Right lobe of liver (tissue), 6 donors: ENCODE measurements at regions of chr6 and their contacts with region 1.

Region 1: DNA sequence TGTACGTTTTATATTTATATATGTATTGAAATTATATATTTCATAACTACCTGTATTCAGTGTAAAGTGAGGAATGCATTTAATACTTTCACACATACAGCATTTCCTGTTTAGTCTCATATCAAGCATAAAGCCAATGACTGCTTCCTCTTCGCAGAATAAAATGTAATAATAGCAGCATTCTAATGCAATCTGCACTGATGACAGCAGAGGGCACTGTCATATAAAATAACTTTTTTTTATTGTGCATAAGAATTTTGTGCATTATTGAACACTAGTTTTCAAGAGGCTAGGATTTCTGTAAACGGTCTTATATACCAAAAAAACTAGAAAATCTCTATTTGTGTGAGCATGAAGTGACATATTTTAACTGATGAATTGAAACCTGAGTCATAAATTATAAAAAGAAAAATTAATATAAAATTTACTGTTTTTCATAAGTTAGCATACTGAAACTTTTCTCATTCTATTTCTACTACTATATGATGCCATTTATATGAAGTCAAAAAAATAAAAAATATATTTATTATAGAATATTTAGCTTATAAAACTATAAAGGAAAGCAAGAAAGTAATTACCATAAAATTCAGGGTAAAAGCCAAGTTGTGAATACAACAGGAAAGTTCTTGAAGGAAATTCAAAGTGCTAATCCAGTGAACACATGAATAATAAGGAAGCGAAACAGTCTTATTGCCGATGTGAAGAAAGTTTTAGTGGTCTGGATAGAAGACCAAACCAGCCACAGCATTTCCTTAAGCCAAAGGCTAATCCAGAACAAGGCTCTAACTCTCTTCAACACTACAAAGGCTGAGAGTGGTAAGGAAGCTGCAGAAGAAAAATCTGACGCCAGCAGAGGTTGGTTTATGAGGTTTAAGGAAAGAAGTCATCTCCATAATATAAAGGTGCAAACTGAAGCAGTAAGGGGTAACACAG is 36.3 kb downstream of the RNF146 start:
- DNase-seq: no peak
- ATAC-seq: peak; percentile 76 to 88 (median 86)
- H3K4me3 ChIP-seq: no peak overlapping the region
- H3K27ac ChIP-seq: no peak overlapping the region
- H3K4me1 ChIP-seq: peaks cover 0 to 6% (median 0%) of the 10 kb centered on the region in 4 donors
- H3K27me3 ChIP-seq: no peaks in the 10 kb centered on the region
- CTCF ChIP-seq: peak; percentile 67 to 73 (median 68)
- POLR2A ChIP-seq: no peak

Region 2: DNA sequence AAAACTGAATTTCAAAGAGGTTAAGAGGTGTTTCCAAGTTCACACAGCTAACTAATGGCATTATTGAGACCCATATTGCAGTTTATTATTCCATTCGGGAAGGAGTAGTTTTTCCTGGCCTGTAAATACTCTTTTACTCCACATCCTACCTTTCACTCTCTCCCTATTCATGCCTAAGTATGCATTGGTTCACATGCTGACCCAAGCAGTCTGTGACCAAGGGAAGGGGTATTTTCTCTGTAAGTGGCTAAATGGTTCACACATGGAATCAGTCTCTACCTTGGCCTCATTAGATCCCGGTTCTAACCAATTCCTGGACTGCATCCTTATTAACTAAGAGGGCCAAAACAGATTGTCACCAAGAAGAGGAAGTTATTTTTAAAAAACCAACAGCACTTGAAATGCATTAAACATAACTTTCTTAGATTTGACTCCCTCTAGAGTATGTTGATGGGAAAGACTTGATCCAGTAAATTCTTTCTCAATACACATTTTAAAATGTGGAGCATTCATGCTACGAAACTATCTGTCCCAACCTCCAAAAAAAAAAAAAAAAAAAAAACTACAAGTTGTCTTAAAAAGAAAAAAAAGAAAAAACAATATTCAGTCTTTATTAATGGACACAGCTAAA is 202.4 kb before region 1 on chr6:
- intact Hi-C with region 1: no loop called
- DNase-seq: no peak
- ATAC-seq: no peak
- H3K4me3 ChIP-seq: no peak overlapping the region
- H3K27ac ChIP-seq: no peak overlapping the region
- H3K4me1 ChIP-seq: no peaks in the 10 kb centered on the region
- H3K27me3 ChIP-seq: no peaks in the 10 kb centered on the region
- CTCF ChIP-seq: peak in 3 of 4 donors; percentile 14 to 20 (median 16)
- POLR2A ChIP-seq: no peak

Region 3: GRCh38 chr6:127420556-127420955 is 117.6 kb after region 1 on chr6:
- intact Hi-C with region 1: loop called in 1 of 2 experiments (anchors 10 kb)
- DNase-seq: peak in 1 of 3 donors; percentile 35
- ATAC-seq: peak; percentile 97 to 100 (median 97)
- H3K4me3 ChIP-seq: no peak overlapping the region
- H3K27ac ChIP-seq: no peak overlapping the region
- H3K4me1 ChIP-seq: no peaks in the 10 kb centered on the region
- H3K27me3 ChIP-seq: no peaks in the 10 kb centered on the region
- CTCF ChIP-seq: peak; percentile 39 to 71 (median 60)
- POLR2A ChIP-seq: no peak